Naive thymus-derived CD4-positive, alpha-beta T cell (primary cell): ENCODE measurements at regions of chr4 and their contacts with region 1.

Region 1: DNA sequence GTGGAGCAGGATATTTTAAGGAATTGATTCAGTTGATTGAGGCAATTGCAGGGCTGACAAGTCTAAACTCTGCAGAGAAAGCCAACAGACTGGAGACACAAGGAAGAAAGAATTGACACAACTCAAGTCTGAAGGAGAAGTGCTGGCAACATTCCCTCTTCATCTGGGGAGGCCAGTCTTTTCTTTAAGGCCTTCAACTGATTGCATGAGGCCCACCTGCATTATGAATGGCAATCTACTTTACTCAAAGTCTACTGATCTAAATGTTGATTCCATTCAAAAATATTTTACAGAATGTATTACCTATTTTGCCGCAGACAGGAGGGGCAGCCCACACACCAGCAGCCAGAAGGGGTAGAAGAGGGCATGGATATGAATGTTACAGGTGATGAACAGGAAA is 425.2 kb downstream of the PCDH10 start:
- DNase-seq: no peak
- ATAC-seq: no peak
- H3K4me3 ChIP-seq: no peak overlapping the region
- H3K4me3 Mint-ChIP-seq: no peak overlapping the region
- H3K27ac ChIP-seq: no peak overlapping the region
- H3K27ac Mint-ChIP-seq: no peak overlapping the region
- H3K4me1 ChIP-seq: no peaks in the 10 kb centered on the region
- H3K4me1 Mint-ChIP-seq: peaks cover 0 to 1% (median 0%) of the 10 kb centered on the region in 7 donors
- H3K27me3 ChIP-seq: no peaks in the 10 kb centered on the region
- H3K27me3 Mint-ChIP-seq: no peaks in the 10 kb centered on the region

Region 2: DNA sequence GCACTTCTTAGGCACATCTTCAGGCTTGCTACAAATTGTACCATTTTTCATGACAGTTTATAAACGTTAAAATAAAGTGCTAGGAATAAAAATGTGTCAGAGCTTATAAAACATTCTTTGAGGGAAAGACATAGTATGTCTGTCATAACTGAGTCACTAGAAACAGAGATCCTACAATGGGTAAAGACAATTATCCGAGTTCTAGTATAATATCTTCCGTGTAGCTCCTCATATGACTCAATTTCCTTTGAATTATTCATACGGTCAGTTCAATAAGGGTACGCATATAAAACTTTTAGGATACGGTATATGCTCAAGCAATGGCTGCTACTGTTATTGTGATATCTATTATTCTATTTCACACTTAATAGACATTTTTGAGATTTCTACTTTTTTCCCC is 76.1 kb before region 1 on chr4:
- CTCF ChIA-PET with region 1: no interaction called
- POLR2A ChIA-PET with region 1: no interaction called
- intact Hi-C with region 1: loop called in 1 of 2 experiments (anchors 2 kb)
- DNase-seq: no peak
- ATAC-seq: no peak
- H3K4me3 ChIP-seq: no peak overlapping the region
- H3K4me3 Mint-ChIP-seq: no peak overlapping the region
- H3K27ac ChIP-seq: no peak overlapping the region
- H3K27ac Mint-ChIP-seq: no peak overlapping the region
- H3K4me1 ChIP-seq: no peaks in the 10 kb centered on the region
- H3K4me1 Mint-ChIP-seq: no peaks in the 10 kb centered on the region
- H3K27me3 ChIP-seq: no peaks in the 10 kb centered on the region
- H3K27me3 Mint-ChIP-seq: no peaks in the 10 kb centered on the region